Esophagus squamous epithelium (tissue), 5 donors: ENCODE measurements at regions of chr22 and their contacts with region 1.

Region 1: GRCh38 chr22:46116491-46116958 is 33.8 kb upstream of the PPARA start:
- DNase-seq: peak; percentile 75
- H3K4me3 ChIP-seq: no peak overlapping the region
- H3K27ac ChIP-seq: peak overlapping the region; percentile 68 to 92 (median 86)
- H3K4me1 ChIP-seq: peaks cover 39 to 80% (median 50%) of the 10 kb centered on the region in 3 donors
- H3K27me3 ChIP-seq: no peaks in the 10 kb centered on the region
- CTCF ChIP-seq: peak; percentile 80 to 97 (median 88)
- POLR2A ChIP-seq: no peak

Region 2: GRCh38 chr22:45994491-45995404 is 121.8 kb before region 1 on chr22:
- intact Hi-C with region 1: loop called (anchors 5 kb)
- DNase-seq: no peak
- H3K4me3 ChIP-seq: no peak overlapping the region
- H3K27ac ChIP-seq: no peak overlapping the region
- H3K4me1 ChIP-seq: peaks cover 32 to 54% (median 42%) of the 10 kb centered on the region in 3 donors
- H3K27me3 ChIP-seq: no peaks in the 10 kb centered on the region
- CTCF ChIP-seq: peak; percentile 90 to 98 (median 96)
- POLR2A ChIP-seq: no peak